Mammary epithelial cell (primary cell): ENCODE measurements at regions of chr14 and their contacts with region 1.

Region 1: GRCh38 chr14:67571272-67571850 is 28.7 kb downstream of the PIGH start:
- DNase-seq: peak; percentile 37
- H3K4me3 ChIP-seq: no peak overlapping the region
- H3K27ac ChIP-seq: no peak overlapping the region
- H3K4me1 ChIP-seq: no peaks in the 10 kb centered on the region
- H3K27me3 ChIP-seq: no peaks in the 10 kb centered on the region
- CTCF ChIP-seq: peak; percentile 94 to 97

Region 2: DNA sequence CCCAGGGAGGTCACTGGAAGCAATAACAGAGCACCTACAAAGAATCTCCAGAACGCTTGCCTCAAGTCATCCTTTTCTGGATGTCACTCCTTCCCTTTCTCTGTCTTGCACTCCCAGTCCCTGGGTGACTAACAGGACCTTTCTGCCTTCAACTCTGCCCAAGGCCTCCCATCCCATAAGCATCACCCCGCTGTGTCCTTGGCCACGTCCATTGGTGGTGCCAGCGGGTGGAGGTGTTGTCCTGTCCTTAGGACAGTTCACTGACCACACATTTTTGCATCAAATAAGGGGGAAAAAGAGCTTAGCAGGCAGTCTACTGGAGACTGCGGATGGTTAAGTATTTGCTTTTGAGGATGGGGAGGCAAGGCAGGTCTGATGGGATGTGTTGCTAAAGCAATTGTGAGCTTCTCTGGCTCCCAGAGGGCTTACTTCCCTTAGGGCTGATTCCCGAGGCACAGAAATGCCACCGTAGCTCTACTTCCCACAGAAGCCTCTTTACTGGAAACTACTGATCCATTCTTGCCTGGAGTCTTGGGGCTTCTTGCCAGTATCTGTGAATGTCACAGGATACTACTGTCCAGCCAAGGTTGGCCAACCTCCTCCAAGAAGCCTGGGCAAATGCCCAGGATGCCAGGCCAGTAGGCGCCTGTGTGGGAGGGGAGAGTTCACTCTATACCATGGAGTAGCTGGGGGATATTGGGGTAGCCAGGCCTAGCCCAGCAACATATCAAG is 135.6 kb before region 1 on chr14:
- CTCF ChIA-PET with region 1: interaction called, 3 read pairs
- dilution Hi-C with region 1: loop called (anchors 10 kb)
- in situ Hi-C with region 1: loop called in 1 of 2 experiments (anchors 10 kb)
- intact Hi-C with region 1: no loop called
- DNase-seq: no peak
- H3K4me3 ChIP-seq: no peak overlapping the region
- H3K27ac ChIP-seq: no peak overlapping the region
- H3K4me1 ChIP-seq: peaks cover 4% of the 10 kb centered on the region
- H3K27me3 ChIP-seq: no peaks in the 10 kb centered on the region
- CTCF ChIP-seq: no peak

Region 3: GRCh38 chr14:67526676-67527459 is 44.5 kb before region 1 on chr14:
- CTCF ChIA-PET with region 1: interaction called, 37 read pairs
- dilution Hi-C with region 1: loop called (anchors 5 kb)
- in situ Hi-C with region 1: no loop called
- intact Hi-C with region 1: loop called (anchors 1 kb)
- DNase-seq: peak; percentile 51
- H3K4me3 ChIP-seq: no peak overlapping the region
- H3K27ac ChIP-seq: no peak overlapping the region
- H3K4me1 ChIP-seq: peaks cover 6% of the 10 kb centered on the region
- H3K27me3 ChIP-seq: no peaks in the 10 kb centered on the region
- CTCF ChIP-seq: peak; percentile 73 to 82

Region 4: DNA sequence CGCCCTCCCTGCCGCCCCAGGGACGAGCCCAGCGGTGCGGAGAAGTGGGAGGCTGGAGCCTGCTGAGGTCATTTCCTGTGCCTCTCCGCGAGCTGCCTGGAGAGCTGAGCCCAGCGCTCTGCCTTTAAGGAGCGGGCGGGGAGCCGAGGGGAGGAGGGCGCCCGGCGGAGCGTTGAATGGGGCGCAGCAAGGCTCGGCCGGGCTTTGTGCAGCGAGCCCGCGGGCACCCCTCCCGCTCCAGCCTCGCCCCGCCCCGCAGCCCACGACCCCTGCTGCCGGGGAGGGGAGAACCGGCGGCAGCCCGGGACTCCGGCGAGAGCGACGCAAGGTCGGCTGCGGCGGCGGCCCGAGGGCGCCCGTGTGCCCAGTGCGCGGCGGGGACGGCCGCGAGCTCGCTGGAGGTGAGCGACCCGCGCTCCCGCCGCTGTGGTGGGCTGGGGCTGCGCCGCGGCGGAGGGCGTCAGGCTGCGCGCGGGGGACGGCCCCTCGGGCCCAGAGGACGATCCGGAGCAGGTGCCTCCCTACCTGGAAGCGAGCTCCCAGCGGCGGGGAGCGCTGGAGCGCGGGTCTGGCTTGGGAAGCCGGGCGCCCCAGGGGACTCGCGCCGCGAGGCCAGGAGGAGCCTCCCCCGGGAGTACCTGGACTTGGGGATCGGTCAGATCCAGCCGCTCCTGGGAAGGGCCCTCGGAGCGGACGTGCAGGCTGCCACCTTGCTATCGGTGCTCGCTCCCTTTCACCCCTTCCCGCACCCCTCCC is 38.2 kb before region 1 on chr14 and contains the start of gene PLEKHH1:
- CTCF ChIA-PET with region 1: interaction called, 7 read pairs
- dilution Hi-C with region 1: loop called (anchors 5 kb)
- in situ Hi-C with region 1: no loop called
- intact Hi-C with region 1: no loop called
- DNase-seq: peak; percentile 72
- H3K4me3 ChIP-seq: peak within 1 kb of the TSS; percentile 55 to 70 (median 64)
- H3K27ac ChIP-seq: no peak within 1 kb of the TSS
- H3K4me1 ChIP-seq: peaks cover 7% of the 10 kb centered on the region
- H3K27me3 ChIP-seq: no peaks in the 10 kb centered on the region
- CTCF ChIP-seq: no peak
- total RNA-seq, gene PLEKHH1: 6.7 to 11.9 TPM

Region 5: DNA sequence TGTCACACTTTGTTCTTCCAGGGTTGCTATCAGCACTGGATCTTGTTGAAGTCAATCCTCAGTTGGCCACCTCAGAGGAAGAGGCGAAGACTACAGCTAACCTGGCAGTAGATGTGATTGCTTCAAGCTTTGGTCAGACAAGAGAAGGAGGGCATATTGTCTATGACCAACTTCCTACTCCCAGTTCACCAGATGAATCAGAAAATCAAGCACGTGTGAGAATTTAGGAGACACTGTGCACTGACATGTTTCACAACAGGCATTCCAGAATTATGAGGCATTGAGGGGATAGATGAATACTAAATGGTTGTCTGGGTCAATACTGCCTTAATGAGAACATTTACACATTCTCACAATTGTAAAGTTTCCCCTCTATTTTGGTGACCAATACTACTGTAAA is 79.3 kb after region 1 on chr14:
- CTCF ChIA-PET with region 1: no interaction called
- dilution Hi-C with region 1: loop called (anchors 5 kb)
- in situ Hi-C with region 1: no loop called
- intact Hi-C with region 1: no loop called
- DNase-seq: peak; percentile 85
- H3K4me3 ChIP-seq: no peak overlapping the region
- H3K27ac ChIP-seq: peak overlapping the region; percentile 58
- H3K4me1 ChIP-seq: peaks cover 16% of the 10 kb centered on the region
- H3K27me3 ChIP-seq: no peaks in the 10 kb centered on the region
- CTCF ChIP-seq: no peak